ENCODE measurements at regions of chr21 and their contacts with region 1.

Region 1: DNA sequence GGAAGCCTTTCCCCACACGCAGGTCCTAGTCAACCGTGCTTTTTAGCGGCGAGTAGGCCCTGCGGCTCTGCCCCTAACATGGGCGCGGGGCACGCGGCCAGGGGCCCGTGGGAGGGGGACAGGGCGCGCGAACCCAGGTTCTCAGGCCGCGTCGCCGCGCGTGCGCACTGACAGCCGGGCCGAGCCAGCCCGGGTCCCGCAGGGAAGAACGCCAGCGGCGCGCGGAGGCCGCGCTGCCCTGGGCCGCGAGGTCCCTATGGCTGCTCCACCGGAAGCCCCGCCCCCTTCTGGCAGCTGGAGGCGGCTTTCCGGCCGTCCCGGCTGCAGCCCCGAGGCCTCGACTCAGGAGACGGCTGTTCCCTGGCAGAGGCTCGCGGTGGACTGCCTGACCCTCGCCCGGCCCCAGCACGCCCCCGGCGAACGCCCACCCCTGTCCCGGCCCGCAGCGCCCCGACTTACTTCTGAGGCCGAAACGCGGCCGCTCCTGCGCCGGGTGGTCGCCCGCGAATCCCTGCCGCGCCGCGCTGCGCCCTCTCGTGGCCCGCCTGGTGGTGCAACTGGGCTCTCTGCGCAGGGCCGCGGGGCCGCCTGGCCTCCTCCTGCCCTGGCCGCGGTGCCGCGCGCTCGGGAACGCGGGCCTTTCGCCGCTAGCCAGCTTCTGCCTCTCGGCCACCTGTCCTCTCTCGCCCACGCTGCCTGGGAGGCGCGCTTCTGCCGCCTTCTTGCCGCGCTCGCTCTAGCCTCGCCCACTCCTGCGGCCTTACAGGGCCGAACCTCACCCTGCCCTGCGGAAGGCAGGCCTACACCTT is 16.6 kb upstream of the RIPPLY3 start:
- DNase-seq: peak; percentile 94
- ATAC-seq: peak; percentile 88
- H3K4me3 Mint-ChIP-seq: peak overlapping the region; percentile 71
- H3K27ac Mint-ChIP-seq: peak overlapping the region; percentile 88
- H3K4me1 Mint-ChIP-seq: peaks cover 47% of the 10 kb centered on the region
- H3K27me3 Mint-ChIP-seq: no peaks in the 10 kb centered on the region

Region 2: DNA sequence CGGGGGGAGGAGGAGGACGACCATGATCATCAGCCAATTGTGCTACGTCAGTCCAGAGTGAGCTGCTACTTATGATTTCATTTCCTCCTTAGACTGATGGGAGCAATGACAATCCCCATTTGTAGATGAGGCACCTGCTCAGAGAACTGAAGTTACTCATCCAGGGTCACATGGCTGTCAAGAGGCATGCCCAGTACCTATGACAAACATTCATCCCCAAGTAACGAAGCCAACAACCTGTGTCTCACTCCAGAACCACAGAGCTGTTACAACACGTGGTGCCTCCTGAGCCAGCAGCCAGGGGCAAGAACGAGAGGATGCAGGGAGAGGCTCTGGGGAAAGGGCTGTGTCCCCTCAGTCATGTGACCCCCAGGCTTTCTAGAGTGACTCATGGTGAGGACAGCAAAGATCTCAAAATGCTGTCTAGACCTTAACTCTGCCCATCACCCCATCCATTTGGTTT is 197.4 kb before region 1 on chr21:
- CTCF ChIA-PET with region 1: no interaction called
- POLR2A ChIA-PET with region 1: no interaction called
- intact Hi-C with region 1: no loop called
- DNase-seq: peak; percentile 21
- ATAC-seq: peak; percentile 96
- H3K4me3 Mint-ChIP-seq: no peak overlapping the region
- H3K27ac Mint-ChIP-seq: no peak overlapping the region
- H3K4me1 Mint-ChIP-seq: no peaks in the 10 kb centered on the region
- H3K27me3 Mint-ChIP-seq: no peaks in the 10 kb centered on the region

Region 3: GRCh38 chr21:36966066-36966820 is 23.7 kb before region 1 on chr21 and contains the start of gene HLCS:
- CTCF ChIA-PET with region 1: interaction called, 10 read pairs
- POLR2A ChIA-PET with region 1: interaction called, 3 read pairs
- intact Hi-C with region 1: loop called in 1 of 2 experiments (anchors 1 kb)
- DNase-seq: peak; percentile 84
- ATAC-seq: peak; percentile 90
- H3K4me3 Mint-ChIP-seq: peak within 1 kb of the TSS; percentile 73
- H3K27ac Mint-ChIP-seq: peak within 1 kb of the TSS; percentile 88
- H3K4me1 Mint-ChIP-seq: peaks cover 9% of the 10 kb centered on the region
- H3K27me3 Mint-ChIP-seq: no peaks in the 10 kb centered on the region
- total RNA-seq, gene HLCS: 14.3 to 15.0 TPM

Region 4: GRCh38 chr21:36976882-36977651 is 12.8 kb before region 1 on chr21:
- CTCF ChIA-PET with region 1: interaction called, 12 read pairs
- POLR2A ChIA-PET with region 1: no interaction called
- intact Hi-C with region 1: loop called (anchors 1 kb)
- DNase-seq: peak; percentile 51
- ATAC-seq: peak; percentile 79
- H3K4me3 Mint-ChIP-seq: no peak overlapping the region
- H3K27ac Mint-ChIP-seq: peak overlapping the region; percentile 42
- H3K4me1 Mint-ChIP-seq: peaks cover 22% of the 10 kb centered on the region
- H3K27me3 Mint-ChIP-seq: peaks cover 2% of the 10 kb centered on the region

Region 5: GRCh38 chr21:37220981-37221664 is 231.2 kb after region 1 on chr21:
- CTCF ChIA-PET with region 1: no interaction called
- POLR2A ChIA-PET with region 1: no interaction called
- intact Hi-C with region 1: loop called in 1 of 2 experiments (anchors 1 kb)
- DNase-seq: peak; percentile 98
- ATAC-seq: peak; percentile 84
- H3K4me3 Mint-ChIP-seq: peak overlapping the region; percentile 82
- H3K27ac Mint-ChIP-seq: peak overlapping the region; percentile 97
- H3K4me1 Mint-ChIP-seq: peaks cover 47% of the 10 kb centered on the region
- H3K27me3 Mint-ChIP-seq: no peaks in the 10 kb centered on the region

Region 6: GRCh38 chr21:37267269-37268184 is 277.6 kb after region 1 on chr21 and contains the start of gene VPS26C:
- CTCF ChIA-PET with region 1: no interaction called
- POLR2A ChIA-PET with region 1: no interaction called
- intact Hi-C with region 1: loop called in 1 of 2 experiments (anchors 5 kb)
- DNase-seq: peak; percentile 99
- ATAC-seq: peak; percentile 92
- H3K4me3 Mint-ChIP-seq: peak within 1 kb of the TSS; percentile 84
- H3K27ac Mint-ChIP-seq: peak within 1 kb of the TSS; percentile 99
- H3K4me1 Mint-ChIP-seq: peaks cover 28% of the 10 kb centered on the region
- H3K27me3 Mint-ChIP-seq: no peaks in the 10 kb centered on the region
- total RNA-seq, gene VPS26C: 54.8 to 61.7 TPM

Measured in activated CD4-positive, alpha-beta T cell treated with anti-CD3 and anti-CD28 coated beads for 36 hours (primary cell).